PC-9 (cell line): ENCODE measurements at regions of chr12 and their contacts with region 1.

Region 1: GRCh38 chr12:93569656-93570551 is 2.6 kb upstream of the SOCS2 start:
- DNase-seq: peak; percentile 79 to 83
- H3K4me3 ChIP-seq: peak overlapping the region; percentile 94
- H3K27ac ChIP-seq: peak overlapping the region; percentile 80
- H3K4me1 ChIP-seq: peaks cover 2% of the 10 kb centered on the region
- H3K27me3 ChIP-seq: no peaks in the 10 kb centered on the region
- CTCF ChIP-seq: peak; percentile 87

Region 2: DNA sequence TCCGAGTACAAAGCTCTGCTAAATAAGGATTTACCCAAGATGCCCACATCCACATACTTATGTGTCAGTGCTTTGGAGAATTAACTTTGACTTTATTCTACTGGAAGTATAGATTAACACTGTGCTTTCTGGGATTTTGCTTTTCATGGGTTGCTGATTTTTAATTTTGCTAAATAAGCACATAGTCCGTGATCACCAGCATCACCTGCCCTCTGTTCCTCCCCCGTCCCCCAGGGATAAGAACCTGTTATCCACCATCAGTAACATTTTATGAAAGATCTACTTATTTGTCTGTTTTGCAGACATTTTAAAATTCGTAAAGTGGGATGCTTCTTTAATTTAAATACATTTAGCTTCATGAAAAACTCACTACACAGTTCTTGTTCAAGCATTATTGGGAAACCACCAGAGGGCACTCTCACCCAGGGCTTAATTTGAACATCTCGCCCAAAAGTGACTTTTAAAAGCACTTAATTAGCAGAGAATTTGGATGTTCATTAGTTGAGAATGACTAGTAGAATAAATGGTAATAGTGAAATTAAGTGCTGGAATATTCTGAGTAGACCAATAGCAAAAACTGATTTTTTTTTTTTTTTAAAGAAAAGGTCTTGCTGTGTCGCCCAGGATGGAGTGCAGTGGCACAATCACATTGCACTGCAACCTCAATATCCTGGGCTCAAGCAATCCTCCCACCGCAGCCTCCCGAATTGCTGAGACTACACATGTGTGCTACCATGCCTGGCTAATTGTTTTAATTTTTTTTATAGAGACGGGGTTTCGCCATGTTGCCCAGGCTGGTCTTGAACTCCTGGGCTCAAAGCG is 66.9 kb before region 1 on chr12:
- CTCF ChIA-PET with region 1: interaction called, 5 read pairs
- POLR2A ChIA-PET with region 1: no interaction called
- intact Hi-C with region 1: loop called (anchors 2 kb)
- DNase-seq: peak in 1 of 2 experiments; percentile 41
- H3K4me3 ChIP-seq: no peak overlapping the region
- H3K27ac ChIP-seq: no peak overlapping the region
- H3K4me1 ChIP-seq: no peaks in the 10 kb centered on the region
- H3K27me3 ChIP-seq: no peaks in the 10 kb centered on the region
- CTCF ChIP-seq: peak; percentile 92

Region 3: GRCh38 chr12:93677195-93678064 is 107.5 kb after region 1 on chr12 and contains the start of gene CRADD:
- CTCF ChIA-PET with region 1: no interaction called
- POLR2A ChIA-PET with region 1: no interaction called
- intact Hi-C with region 1: loop called (anchors 1 kb)
- DNase-seq: peak; percentile 63 to 87
- H3K4me3 ChIP-seq: peak within 1 kb of the TSS; percentile 72
- H3K27ac ChIP-seq: peak within 1 kb of the TSS; percentile 87
- H3K4me1 ChIP-seq: peaks cover 8% of the 10 kb centered on the region
- H3K27me3 ChIP-seq: no peaks in the 10 kb centered on the region
- CTCF ChIP-seq: no peak
- total RNA-seq, gene CRADD: 7.6 and 9.3 TPM in 2 replicates

Region 4: DNA sequence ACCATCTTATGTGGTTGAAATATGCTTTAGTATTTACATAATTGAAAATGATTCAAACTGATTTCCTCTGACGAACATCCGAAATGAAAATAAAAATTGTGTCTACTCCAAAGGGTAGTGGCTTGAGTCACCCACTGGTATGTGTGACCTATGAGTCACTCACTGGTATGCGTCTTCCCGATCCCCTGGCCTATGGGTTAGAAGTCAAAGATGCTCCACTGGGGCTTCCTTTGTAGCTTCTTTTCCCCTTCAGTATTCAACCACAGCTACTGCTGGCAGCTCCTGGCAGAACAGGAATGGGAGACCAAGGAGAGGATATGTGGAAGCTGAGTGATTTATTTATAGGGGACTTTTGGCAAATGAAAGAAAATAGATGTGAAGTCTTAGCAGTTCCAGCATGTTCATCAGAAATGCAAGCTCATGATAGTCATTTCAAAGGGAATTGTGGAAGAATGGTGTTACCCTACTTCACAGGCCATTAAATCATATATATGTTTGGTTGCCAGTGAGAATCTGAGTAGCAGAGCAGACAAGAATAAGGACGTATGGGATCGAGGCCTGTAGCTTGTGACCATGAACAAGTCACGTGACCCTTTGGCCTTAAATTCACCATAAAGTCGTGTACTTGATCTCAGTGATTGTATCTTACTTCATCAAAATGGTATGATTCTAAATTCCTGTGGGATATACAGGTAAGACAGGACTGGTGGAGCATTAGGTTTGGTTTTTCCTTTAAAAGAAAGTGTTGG is 215.5 kb after region 1 on chr12:
- CTCF ChIA-PET with region 1: interaction called, 3 read pairs
- POLR2A ChIA-PET with region 1: no interaction called
- intact Hi-C with region 1: loop called (anchors 1 kb)
- DNase-seq: peak; percentile 73 to 96
- H3K4me3 ChIP-seq: peak overlapping the region; percentile 40; the same call in 1 of the 2 replicates
- H3K27ac ChIP-seq: peak overlapping the region; percentile 93
- H3K4me1 ChIP-seq: peaks cover 58% of the 10 kb centered on the region
- H3K27me3 ChIP-seq: no peaks in the 10 kb centered on the region
- CTCF ChIP-seq: no peak

Region 5: DNA sequence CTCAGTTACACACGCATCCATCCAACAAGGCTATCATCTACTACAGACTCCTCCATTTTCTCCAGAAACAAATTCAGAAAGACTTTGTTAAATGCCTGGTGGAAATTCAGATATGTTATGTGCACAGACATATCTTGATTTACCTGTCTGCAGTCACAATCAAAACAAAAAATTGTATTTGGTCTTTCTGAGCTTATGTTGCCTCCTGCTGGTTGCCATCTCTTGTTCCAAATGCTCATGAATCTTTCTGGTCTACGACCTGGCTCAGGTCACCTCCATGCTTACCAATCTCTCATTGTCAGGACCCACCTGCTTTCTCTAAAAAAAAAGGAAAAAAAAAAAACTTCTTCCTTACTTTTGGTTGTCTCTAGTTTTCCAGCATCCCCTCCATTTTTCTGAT is 409.3 kb after region 1 on chr12:
- CTCF ChIA-PET with region 1: no interaction called
- POLR2A ChIA-PET with region 1: no interaction called
- intact Hi-C with region 1: loop called (anchors 2 kb)
- DNase-seq: no peak
- H3K4me3 ChIP-seq: no peak overlapping the region
- H3K27ac ChIP-seq: no peak overlapping the region
- H3K4me1 ChIP-seq: no peaks in the 10 kb centered on the region
- H3K27me3 ChIP-seq: no peaks in the 10 kb centered on the region
- CTCF ChIP-seq: peak; percentile 51